HepG2 (cell line): ENCODE measurements at regions of chr20 and their contacts with region 1.

Region 1: DNA sequence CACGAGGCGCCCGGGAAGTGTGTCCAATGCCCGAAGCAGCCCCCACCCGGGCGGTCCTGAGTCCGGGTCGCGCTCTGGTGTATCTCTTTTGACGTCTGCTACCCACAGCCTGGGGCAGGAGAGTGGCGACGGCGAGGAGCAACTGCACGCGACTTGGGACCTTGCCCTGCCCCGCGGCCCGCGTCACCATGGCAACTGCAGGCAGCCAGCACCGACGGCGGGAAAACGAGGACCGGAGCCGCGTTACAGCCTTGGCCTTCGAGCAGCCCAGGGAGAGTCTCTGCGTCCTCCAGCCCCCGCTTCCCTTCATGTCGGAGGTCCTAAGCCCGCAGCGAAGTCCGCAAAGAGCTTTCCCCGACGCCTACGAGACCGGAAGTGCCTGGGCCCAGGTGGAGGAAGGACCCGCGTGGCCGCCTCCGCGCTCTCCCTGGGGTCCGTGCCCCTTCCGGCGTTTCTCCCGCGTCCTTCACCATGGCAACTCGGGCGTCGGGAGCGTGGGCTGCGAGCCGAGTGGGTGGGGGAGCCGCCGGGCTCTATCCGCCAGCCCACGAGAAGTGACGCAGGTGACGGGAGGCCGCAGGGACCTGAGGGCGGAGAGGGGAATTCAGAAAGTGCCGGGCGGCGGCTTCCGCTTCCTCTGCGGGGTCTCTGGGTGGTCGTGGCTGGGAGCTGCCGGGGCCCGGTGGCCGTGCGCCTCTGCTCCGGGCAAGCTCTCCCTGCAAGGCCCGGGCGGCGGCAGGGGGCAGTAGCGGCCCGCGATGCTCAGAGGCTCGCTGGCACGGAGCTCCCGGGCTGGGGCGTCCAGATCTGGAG is 88.6 kb upstream of the TGM3 start:
- DNase-seq: peak; percentile 53
- ATAC-seq: peak; percentile 99
- H3K4me3 ChIP-seq: peak overlapping the region; percentile 45 to 75 (median 54)
- H3K27ac ChIP-seq: no peak overlapping the region
- H3K4me1 ChIP-seq: peaks cover 13% of the 10 kb centered on the region
- H3K27me3 ChIP-seq: peaks cover 4 to 33% of the 10 kb centered on the region in 2 experiments; a peak in 4 of 5 replicates
- CTCF ChIP-seq: peak; percentile 99
- EP300 ChIP-seq: no peak
- POLR2A ChIP-seq: no peak
- RAD21 ChIP-seq: peak; percentile 99

Region 2: DNA sequence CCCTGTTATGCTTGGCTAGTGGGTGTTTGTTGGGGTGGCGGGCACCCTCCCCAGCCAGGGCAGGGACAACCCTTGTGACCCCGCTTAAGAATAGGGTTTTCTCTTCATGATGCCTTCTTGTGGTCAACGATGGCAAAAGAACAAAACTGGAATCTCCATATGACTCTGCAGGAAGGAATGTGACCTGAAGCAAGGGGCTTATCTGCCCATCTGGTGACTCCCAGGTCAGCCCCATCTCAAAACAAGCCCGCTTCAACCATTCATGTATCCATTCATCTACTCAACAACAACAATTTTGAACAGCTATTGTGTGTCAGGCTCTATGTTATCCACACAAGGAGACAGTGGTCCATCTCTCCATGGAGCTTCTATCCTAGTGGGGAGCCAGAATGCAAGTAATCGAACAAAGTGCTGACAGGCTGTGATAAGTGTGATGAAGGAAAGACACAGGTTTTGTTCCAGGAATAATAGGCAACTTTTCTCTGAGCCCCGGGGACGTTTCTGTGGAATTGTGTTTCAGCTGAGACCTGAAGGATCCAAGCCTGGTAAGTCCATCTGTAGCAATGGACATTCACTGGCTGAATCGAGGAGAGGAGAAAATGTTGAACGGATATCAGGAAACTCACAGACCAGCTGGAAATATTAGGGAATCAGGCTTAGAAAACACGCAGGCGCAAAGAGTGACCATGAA is 142.8 kb after region 1 on chr20:
- CTCF ChIA-PET with region 1: interaction called, 33 read pairs
- POLR2A ChIA-PET with region 1: no interaction called
- in situ Hi-C with region 1: no loop called
- intact Hi-C with region 1: loop called (anchors 1 kb)
- DNase-seq: peak; percentile 39
- ATAC-seq: no peak
- H3K4me3 ChIP-seq: no peak overlapping the region
- H3K27ac ChIP-seq: no peak overlapping the region
- H3K4me1 ChIP-seq: peaks cover 4% of the 10 kb centered on the region; the same call in 1 of the 2 replicates
- H3K27me3 ChIP-seq: peaks cover 0 to 6% of the 10 kb centered on the region in 2 experiments; a peak in 2 of 5 replicates
- CTCF ChIP-seq: no peak
- EP300 ChIP-seq: no peak
- POLR2A ChIP-seq: no peak
- RAD21 ChIP-seq: no peak

Region 3: DNA sequence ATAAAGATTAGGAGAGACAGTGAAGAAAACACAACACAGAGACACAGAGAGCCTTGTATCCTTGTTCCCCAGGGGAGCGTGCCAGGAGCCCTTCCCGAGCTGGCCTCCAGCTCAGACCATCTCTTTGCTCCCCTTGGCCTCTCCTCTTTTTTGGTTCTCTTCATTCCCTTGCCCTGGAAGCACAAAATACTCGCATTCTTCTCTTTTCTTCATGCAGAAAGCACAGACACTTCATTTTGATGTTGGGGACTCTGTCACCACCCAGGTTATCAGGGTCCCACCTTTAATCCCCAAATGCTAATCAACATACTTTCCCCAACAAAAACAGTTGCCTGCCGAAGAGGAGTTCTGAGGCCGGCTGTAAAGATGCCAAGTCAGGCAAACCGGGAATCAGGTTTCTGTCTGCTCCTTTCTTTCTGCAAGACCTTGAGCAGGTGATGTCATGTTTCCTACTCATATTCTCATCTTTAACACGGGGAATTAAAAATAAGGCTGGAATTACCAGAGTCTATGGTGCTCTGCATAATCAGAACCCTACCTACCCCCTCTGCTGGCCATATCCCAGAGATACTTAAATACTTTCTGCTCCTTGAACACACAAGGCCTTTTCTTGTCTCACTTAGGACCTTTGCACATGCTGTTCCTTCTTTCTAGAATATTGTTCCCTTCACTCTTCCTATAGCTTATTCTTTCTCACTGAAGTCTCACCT is 195.3 kb after region 1 on chr20:
- CTCF ChIA-PET with region 1: interaction called, 3 read pairs
- POLR2A ChIA-PET with region 1: no interaction called
- in situ Hi-C with region 1: no loop called
- intact Hi-C with region 1: loop called (anchors 5 kb)
- DNase-seq: peak; percentile 34
- ATAC-seq: peak; percentile 45
- H3K4me3 ChIP-seq: no peak overlapping the region
- H3K27ac ChIP-seq: no peak overlapping the region
- H3K4me1 ChIP-seq: no peaks in the 10 kb centered on the region
- H3K27me3 ChIP-seq: peaks cover 3% of the 10 kb centered on the region in 2 experiments; a peak in 1 of 5 replicates
- CTCF ChIP-seq: peak; percentile 34
- EP300 ChIP-seq: no peak
- POLR2A ChIP-seq: no peak
- RAD21 ChIP-seq: no peak

Region 4: GRCh38 chr20:2451939-2452732 is 245.0 kb after region 1 on chr20:
- CTCF ChIA-PET with region 1: interaction called, 18 read pairs
- POLR2A ChIA-PET with region 1: no interaction called
- in situ Hi-C with region 1: loop called (anchors 5 kb)
- intact Hi-C with region 1: loop called (anchors 2 kb)
- DNase-seq: peak; percentile 78
- ATAC-seq: peak; percentile 84
- H3K4me3 ChIP-seq: no peak overlapping the region
- H3K27ac ChIP-seq: no peak overlapping the region
- H3K4me1 ChIP-seq: no peaks in the 10 kb centered on the region
- H3K27me3 ChIP-seq: no peaks in the 10 kb centered on the region
- CTCF ChIP-seq: peak; percentile 93
- EP300 ChIP-seq: no peak
- POLR2A ChIP-seq: no peak
- RAD21 ChIP-seq: peak; percentile 49; the same call in 1 of the 2 replicates